Activated naive CD4-positive, alpha-beta T cell treated with anti-CD3 and anti-CD28 coated beads for 36 hours (primary cell): ENCODE measurements at regions of chr11 and their contacts with region 1.

Region 1: GRCh38 chr11:518463-519250 is 11.6 kb upstream of the RNH1 start:
- DNase-seq: peak; percentile 87
- H3K4me3 Mint-ChIP-seq: peak overlapping the region; percentile 84
- H3K27ac Mint-ChIP-seq: peak overlapping the region; percentile 76
- H3K4me1 Mint-ChIP-seq: peaks cover 4% of the 10 kb centered on the region
- H3K27me3 Mint-ChIP-seq: no peaks in the 10 kb centered on the region

Region 2: DNA sequence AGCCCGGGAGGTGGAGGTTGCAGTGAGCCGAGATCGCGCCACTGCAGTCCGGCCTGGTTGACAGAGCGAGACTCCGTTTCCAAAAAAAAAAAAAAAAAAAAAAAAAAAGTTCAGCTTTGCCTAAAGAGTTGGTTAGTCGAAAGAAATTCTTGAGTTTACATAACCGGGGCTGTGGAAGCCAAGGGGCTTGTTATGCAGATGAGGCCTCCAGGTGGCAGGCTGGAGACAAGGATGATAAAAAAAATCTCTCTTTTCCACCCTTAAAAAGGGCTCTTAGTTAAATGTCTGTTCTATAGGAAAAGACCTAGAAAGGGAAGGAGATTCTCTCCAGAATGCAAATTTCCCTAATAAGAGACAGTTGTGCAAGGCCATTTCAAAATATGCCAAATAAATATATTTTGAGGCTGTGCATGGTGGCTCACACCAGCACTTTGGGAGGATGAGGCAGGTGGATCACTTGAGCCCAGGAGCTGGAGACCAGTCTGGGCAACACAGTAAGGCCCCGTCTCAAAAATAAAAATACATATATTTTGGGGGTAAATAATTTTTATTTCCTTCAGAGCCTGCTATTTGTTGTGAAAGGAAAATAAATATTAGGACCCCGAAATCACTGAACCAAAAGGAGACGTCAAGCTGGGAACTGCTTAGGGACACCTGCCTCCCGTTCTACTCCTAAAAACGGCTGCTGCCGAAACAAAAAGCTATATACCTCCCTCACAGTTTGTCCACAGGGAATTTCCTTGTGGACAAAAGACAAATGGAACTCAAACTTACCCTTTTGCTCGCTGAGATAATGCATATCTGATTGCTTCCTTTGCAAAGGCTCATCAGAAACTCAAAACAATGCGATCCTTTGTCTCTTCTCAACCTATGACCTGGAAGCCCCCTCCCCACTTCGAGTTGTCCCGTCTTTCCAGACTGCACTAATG is 213.5 kb before region 1 on chr11:
- CTCF ChIA-PET with region 1: interaction called, 4 read pairs
- intact Hi-C with region 1: loop called (anchors 1 kb)
- DNase-seq: peak; percentile 85
- H3K4me3 Mint-ChIP-seq: no peak overlapping the region
- H3K27ac Mint-ChIP-seq: no peak overlapping the region
- H3K4me1 Mint-ChIP-seq: peaks cover 38% of the 10 kb centered on the region
- H3K27me3 Mint-ChIP-seq: peaks cover 8% of the 10 kb centered on the region

Region 3: DNA sequence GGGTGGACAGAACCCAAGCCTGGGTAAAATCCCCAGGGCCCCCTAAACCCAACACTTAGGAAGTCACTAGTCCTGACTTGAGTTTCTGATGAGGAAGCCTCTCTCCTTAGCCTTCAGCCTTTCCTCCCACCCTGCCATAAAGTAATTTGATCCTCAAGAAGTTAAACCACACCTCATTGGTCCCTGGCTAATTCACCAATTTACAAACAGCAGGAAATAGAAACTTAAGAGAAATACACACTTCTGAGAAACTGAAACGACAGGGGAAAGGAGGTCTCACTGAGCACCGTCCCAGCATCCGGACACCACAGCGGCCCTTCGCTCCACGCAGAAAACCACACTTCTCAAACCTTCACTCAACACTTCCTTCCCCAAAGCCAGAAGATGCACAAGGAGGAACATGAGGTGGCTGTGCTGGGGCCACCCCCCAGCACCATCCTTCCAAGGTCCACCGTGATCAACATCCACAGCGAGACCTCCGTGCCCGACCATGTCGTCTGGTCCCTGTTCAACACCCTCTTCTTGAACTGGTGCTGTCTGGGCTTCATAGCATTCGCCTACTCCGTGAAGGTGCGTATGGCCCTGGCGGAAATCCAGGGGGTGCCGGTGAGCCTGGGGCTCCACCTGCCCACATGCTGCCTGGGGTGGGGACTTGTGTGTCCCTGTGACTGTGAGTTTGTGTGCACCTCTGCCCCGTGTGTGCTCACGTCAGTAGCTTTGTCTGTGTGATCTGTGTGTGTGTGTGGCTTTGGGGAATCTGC is 204.7 kb before region 1 on chr11 and contains the start of gene IFITM1:
- CTCF ChIA-PET with region 1: no interaction called
- intact Hi-C with region 1: loop called (anchors 1 kb)
- DNase-seq: peak; percentile 77
- H3K4me3 Mint-ChIP-seq: peak within 1 kb of the TSS; percentile 93
- H3K27ac Mint-ChIP-seq: peak within 1 kb of the TSS; percentile 95
- H3K4me1 Mint-ChIP-seq: peaks cover 22% of the 10 kb centered on the region
- H3K27me3 Mint-ChIP-seq: no peaks in the 10 kb centered on the region
- total RNA-seq, gene IFITM1: 359 to 378 TPM

Region 4: GRCh38 chr11:406978-407739 is 111.5 kb before region 1 on chr11:
- CTCF ChIA-PET with region 1: interaction called, 3 read pairs
- intact Hi-C with region 1: loop called (anchors 1 kb)
- DNase-seq: peak; percentile 91
- H3K4me3 Mint-ChIP-seq: peak overlapping the region; percentile 58
- H3K27ac Mint-ChIP-seq: no peak overlapping the region
- H3K4me1 Mint-ChIP-seq: peaks cover 2% of the 10 kb centered on the region
- H3K27me3 Mint-ChIP-seq: no peaks in the 10 kb centered on the region

Region 5: GRCh38 chr11:535519-536454 is 17.1 kb after region 1 on chr11 and contains the start of gene HRAS:
- CTCF ChIA-PET with region 1: interaction called, 34 read pairs
- intact Hi-C with region 1: loop called (anchors 1 kb)
- DNase-seq: peak; percentile 94
- H3K4me3 Mint-ChIP-seq: peak within 1 kb of the TSS; percentile 88
- H3K27ac Mint-ChIP-seq: peak within 1 kb of the TSS; percentile 69
- H3K4me1 Mint-ChIP-seq: peaks cover 7% of the 10 kb centered on the region
- H3K27me3 Mint-ChIP-seq: no peaks in the 10 kb centered on the region
- total RNA-seq, gene HRAS: 22.0 to 25.8 TPM